Ascending aorta (tissue), 2 donors: ENCODE measurements at regions of chr3 and their contacts with region 1.

Region 1: GRCh38 chr3:21839592-21839991 is 88.6 kb upstream of the ZNF385D start:
- DNase-seq: peak in 1 of 2 donors; percentile 76
- H3K4me3 ChIP-seq: no peak overlapping the region
- H3K27ac ChIP-seq: peak overlapping the region; percentile 15 to 19
- H3K4me1 ChIP-seq: no peaks in the 10 kb centered on the region
- H3K27me3 ChIP-seq: no peaks in the 10 kb centered on the region
- CTCF ChIP-seq: peak in 1 of 3 experiments; percentile 42

Region 2: DNA sequence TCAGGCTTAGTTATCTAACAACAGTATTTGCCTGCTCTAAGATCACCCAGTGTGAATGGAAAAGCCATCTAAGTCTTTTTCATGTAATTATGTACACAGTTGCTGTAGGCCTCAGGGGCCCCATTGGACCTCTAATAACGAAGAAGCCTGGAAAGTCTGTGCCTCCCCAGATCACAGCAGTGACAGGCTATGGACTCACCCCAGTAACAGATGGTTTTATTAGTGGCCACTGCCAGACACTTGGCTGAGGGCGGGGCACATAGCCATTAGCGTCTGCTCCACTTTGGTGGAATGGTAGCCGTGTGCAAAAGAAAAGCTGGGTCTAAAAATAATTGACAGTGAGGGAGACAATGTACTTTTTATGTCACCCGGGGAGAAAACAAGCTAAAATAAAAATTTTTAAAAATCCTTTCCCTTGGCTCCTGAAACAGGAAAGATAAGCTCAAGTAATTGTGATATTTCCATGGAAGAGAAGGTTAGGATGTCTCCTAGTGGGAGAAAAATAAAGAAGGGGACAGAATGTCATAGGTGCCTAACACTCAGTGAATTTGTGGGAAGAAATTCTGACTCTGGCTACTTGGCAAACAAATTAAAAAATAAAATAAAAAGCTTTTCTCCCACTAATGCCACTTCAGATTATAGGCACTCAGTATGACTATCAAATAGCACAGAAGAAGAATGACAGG is 44.3 kb before region 1 on chr3:
- intact Hi-C with region 1: loop called (anchors 5 kb)
- DNase-seq: peak in 1 of 2 donors; percentile 65
- H3K4me3 ChIP-seq: no peak overlapping the region
- H3K27ac ChIP-seq: peak overlapping the region; percentile 17 to 69
- H3K4me1 ChIP-seq: peaks cover 0 to 2% of the 10 kb centered on the region in 2 donors
- H3K27me3 ChIP-seq: no peaks in the 10 kb centered on the region
- CTCF ChIP-seq: no peak